Activated naive CD8-positive, alpha-beta T cell treated with anti-CD3 and anti-CD28 coated beads, Interleukin-2, amount 10 ng/mL, durations not matched to agents 7 days and 5 days (primary cell): ENCODE measurements at regions of chr11 and their contacts with region 1.

Region 1: GRCh38 chr11:119323538-119324033 is 6.7 kb upstream of the MCAM start:
- DNase-seq: peak; percentile 79
- ATAC-seq: no peak
- H3K4me3 Mint-ChIP-seq: no peak overlapping the region
- H3K27ac Mint-ChIP-seq: no peak overlapping the region
- H3K4me1 Mint-ChIP-seq: peaks cover 16% of the 10 kb centered on the region
- H3K27me3 Mint-ChIP-seq: peaks cover 10% of the 10 kb centered on the region

Region 2: DNA sequence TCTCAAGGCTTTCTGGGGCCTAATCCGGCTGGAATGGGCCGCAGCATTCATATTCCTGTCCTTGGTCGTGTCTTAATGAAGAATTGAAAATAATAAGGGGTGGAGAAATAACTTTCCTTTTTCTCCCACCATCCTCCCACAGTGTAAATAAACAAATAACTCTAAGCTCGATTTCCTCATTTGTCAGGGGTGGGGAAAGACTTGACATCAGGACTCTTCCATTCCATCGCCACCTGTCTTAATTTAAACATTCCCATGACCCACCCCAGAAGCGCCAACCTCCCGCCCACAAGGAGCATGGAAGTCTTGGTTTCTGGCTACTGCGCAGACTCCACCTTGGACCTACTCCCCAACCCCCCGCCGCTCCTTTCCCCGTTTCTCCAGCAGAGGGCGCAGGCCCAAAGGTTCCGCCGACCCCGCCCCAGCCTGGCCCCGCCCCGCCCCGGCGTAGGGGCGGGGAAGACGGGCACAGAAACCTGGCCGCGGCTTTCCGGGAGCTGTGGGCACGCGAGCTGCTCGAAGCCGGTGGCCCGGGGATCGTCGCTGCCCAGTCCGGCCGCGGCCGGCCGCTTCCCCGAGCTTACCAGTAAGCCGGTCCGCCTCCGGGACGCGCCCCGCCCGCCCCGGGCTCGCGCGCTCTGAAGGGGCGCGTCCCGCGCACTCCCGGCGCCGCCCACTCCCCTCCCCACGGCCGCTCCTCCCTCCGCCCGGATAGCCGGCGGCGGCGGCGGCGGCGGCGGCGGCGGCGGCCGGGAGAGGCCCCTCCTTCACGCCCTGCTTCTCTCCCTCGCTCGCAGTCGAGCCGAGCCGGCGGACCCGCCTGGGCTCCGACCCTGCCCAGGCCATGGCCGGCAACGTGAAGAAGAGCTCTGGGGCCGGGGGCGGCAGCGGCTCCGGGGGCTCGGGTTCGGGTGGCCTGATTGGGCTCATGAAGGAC is 117.7 kb before region 1 on chr11 and contains the start of gene CBL:
- POLR2A ChIA-PET with region 1: interaction called, 18 read pairs
- DNase-seq: peak; percentile 97
- ATAC-seq: peak; percentile 83
- H3K4me3 Mint-ChIP-seq: peak within 1 kb of the TSS; percentile 99
- H3K27ac Mint-ChIP-seq: peak within 1 kb of the TSS; percentile 90
- H3K4me1 Mint-ChIP-seq: peaks cover 14% of the 10 kb centered on the region
- H3K27me3 Mint-ChIP-seq: no peaks in the 10 kb centered on the region
- total RNA-seq, gene CBL: 45.1 to 45.2 TPM

Region 3: GRCh38 chr11:119306373-119306890 is 17.2 kb before region 1 on chr11:
- POLR2A ChIA-PET with region 1: interaction called, 23 read pairs
- DNase-seq: no peak
- ATAC-seq: peak; percentile 87
- H3K4me3 Mint-ChIP-seq: peak overlapping the region; percentile 18
- H3K27ac Mint-ChIP-seq: peak overlapping the region; percentile 74
- H3K4me1 Mint-ChIP-seq: peaks cover 17% of the 10 kb centered on the region
- H3K27me3 Mint-ChIP-seq: no peaks in the 10 kb centered on the region

Region 4: DNA sequence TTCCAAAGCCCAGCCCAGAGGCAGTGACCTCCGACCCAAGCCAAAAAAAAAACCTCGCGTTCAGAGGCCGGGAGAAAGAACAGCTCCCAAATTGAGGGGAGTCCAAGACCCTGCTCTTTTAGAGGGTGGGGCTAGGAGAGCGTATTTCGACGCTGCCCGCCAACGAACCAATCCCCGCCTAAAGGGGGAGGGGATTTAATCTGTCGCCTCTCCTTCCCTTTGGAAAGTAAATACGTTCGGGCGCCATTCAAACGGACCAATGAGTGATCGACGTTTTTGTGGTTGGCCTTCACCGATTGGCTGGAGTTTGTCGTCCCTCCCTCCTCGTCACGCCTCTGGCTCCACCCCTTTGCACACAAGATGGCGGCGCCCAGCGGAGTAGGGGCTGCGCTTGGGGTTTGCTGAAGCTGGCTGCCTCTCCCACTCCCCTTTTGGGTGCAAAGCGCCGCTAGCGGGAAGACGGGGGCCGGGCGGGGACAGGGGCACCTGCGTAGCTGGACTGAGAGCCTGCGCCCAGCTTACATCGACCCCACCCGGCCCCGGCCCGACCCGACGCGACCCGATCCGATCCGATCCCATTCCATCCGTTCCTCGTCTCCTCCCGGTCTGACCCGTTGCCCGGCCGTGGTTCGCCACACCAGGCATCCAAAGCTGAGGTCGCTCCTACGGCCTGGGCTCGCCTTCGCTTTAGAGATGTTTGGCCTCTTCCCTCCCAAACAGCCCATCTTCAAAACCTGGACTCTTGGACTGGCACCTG is 10.8 kb after region 1 on chr11 and contains the start of gene RNF26:
- POLR2A ChIA-PET with region 1: interaction called, 13 read pairs
- DNase-seq: peak; percentile 91
- ATAC-seq: peak; percentile 93
- H3K4me3 Mint-ChIP-seq: peak within 1 kb of the TSS; percentile 98
- H3K27ac Mint-ChIP-seq: peak within 1 kb of the TSS; percentile 99
- H3K4me1 Mint-ChIP-seq: peaks cover 26% of the 10 kb centered on the region
- H3K27me3 Mint-ChIP-seq: peaks cover 24% of the 10 kb centered on the region
- total RNA-seq, gene RNF26: 32.2 to 32.9 TPM